Ascending aorta (tissue), 2 donors: ENCODE measurements at regions of chr2 and their contacts with region 1.

Region 1: GRCh38 chr2:127387655-127388422 is at the start of gene MAP3K2:
- DNase-seq: peak; percentile 77 to 96
- H3K4me3 ChIP-seq: peak within 1 kb of the TSS; percentile 90 to 99
- H3K27ac ChIP-seq: peak within 1 kb of the TSS; percentile 98 to 100
- H3K4me1 ChIP-seq: peaks cover 8 to 15% of the 10 kb centered on the region in 2 donors
- H3K27me3 ChIP-seq: no peaks in the 10 kb centered on the region
- CTCF ChIP-seq: no peak
- total RNA-seq, gene MAP3K2: 47.7 TPM

Region 2: DNA sequence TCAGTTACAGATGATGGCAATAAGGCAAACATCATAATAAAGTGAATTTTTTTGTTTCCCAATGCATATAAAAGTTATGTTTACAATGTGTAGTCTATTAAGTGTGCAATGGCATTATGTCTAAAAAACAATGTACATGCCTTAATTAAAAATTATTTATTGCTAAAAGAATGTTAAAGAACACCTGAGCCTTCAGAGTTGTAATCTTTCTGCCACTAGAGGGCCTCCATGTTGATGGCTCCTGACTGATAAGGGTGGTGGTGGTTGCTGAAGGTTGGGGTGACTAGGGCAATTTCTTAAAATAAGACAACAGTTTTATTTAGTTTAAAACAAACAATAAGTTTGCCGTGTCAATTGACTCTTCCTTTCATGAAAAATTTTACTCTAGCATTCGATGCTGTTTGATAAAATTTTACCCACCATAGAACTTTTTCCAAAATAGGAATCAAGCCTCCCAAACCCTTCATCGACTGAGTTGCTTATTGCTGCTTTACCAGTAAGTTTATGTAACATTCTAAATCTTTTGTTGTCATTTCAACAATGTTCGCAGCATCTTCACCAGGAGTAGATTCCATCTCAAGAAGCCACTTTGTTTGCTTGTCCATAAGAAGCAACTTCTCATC is 32.3 kb before region 1 on chr2:
- intact Hi-C with region 1: no loop called
- DNase-seq: no peak
- H3K4me3 ChIP-seq: no peak overlapping the region
- H3K27ac ChIP-seq: no peak overlapping the region
- H3K4me1 ChIP-seq: peaks cover 0 to 11% of the 10 kb centered on the region in 2 donors
- H3K27me3 ChIP-seq: no peaks in the 10 kb centered on the region
- CTCF ChIP-seq: peak; percentile 9 to 41 (median 19)

Region 3: GRCh38 chr2:127407661-127408003 is 19.8 kb after region 1 on chr2:
- intact Hi-C with region 1: loop called (anchors 1 kb)
- DNase-seq: no peak
- H3K4me3 ChIP-seq: peak overlapping the region; percentile 23 to 42
- H3K27ac ChIP-seq: peak overlapping the region; percentile 79 to 81
- H3K4me1 ChIP-seq: peaks cover 14 to 60% of the 10 kb centered on the region in 2 donors
- H3K27me3 ChIP-seq: no peaks in the 10 kb centered on the region
- CTCF ChIP-seq: no peak

Region 4: DNA sequence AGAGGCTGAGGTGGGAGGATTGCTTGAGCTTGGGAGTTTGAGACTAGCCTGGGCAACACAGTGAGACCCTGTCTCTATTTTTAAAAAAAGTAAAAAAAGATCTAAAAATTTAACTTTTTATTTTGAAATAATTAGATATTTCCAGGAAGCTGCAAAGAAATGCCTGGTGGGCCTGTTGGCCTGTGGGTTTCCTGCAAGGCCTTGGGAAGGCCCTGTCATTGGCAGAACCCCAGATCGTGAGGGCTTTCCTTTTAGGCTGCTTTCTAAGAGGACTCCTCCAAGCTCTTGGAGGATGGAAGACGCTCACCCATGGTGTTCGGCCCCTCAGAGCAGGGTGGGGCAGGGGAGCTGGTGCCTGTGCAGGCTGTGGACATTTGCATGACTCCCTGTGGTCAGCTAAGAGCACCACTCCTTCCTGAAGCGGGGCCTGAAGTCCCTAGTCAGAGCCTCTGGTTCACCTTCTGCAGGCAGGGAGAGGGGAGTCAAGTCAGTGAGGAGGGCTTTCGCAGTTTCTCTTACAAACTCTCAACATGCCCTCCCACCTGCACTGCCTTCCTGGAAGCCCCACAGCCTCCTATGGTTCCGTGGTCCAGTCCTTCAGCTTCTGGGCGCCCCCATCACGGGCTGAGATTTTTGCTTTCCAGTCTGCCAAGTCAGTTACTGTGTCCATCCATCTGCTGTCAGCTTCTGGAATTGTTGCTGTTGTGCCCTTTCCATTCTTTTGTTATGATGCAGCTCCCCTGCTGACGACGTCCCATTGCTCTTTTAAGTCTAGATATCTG is 37.0 kb after region 1 on chr2:
- intact Hi-C with region 1: no loop called
- DNase-seq: no peak
- H3K4me3 ChIP-seq: no peak overlapping the region
- H3K27ac ChIP-seq: no peak overlapping the region
- H3K4me1 ChIP-seq: peaks cover 5 to 8% of the 10 kb centered on the region in 2 donors
- H3K27me3 ChIP-seq: peaks cover 11% of the 10 kb centered on the region
- CTCF ChIP-seq: no peak

Region 5: DNA sequence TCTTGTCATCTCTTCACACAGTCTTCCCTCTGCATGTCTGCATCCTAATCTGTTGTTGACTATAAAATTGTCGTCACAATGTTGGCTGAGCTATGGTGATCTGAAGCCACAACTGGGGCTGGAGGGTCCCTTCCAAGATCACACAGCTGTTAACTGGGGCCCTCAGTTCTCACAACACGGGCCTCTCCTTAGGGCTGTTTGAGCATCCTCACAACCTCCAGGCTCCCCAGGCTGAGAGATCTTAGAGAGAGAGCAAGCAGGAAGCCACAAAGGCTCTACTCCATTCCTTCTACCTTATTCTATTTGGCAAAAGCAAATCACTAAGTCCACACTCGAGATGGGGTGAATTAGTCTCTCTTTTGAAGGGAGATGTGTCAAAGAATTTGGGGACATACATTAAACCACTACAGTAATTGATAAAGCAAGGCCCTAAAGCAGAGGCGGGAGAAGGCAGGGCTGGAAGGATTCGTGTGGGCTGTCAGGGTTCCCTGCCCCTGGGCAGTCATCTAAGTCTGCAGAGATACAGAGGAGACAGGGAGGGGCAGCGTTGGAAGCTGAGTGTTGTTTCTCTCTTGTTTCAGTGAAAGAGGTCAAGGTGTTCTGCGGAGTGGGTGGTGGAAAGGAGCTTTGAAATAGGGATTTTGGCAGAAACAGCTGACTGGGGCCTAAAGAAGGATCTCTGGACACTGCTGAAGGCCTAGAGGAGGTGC is 163.5 kb after region 1 on chr2:
- intact Hi-C with region 1: no loop called
- DNase-seq: no peak
- H3K4me3 ChIP-seq: no peak overlapping the region
- H3K27ac ChIP-seq: no peak overlapping the region
- H3K4me1 ChIP-seq: no peaks in the 10 kb centered on the region
- H3K27me3 ChIP-seq: no peaks in the 10 kb centered on the region
- CTCF ChIP-seq: no peak

Region 6: DNA sequence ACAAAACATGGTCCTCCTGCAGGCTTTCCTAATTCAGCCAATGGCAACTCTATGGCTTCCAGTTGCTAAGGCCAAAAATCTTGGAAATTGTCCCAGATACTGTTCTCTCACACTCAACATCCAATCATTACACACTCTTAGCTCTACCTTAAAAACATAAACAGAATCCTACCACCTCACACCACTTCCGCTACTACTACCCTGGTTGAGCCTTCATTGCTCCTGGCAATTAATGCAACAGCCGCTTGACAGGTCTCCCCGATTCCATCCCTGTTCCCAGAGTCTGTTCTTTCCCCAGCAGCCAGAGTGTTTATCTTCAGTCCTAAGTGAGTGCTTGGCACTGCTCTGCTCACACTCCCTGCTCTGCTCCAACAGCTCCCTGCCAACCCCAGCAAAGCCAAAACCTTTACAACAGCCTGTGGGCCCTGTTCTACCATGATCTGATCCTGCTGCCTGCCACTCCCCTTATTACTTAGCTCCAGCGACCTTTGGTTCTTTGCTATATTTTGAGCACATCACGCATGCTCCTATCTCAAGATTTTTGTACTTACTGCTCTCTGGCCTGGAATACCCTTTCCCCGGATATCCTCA is 565.4 kb after region 1 on chr2:
- intact Hi-C with region 1: no loop called
- DNase-seq: peak in 1 of 2 donors; percentile 67
- H3K4me3 ChIP-seq: peak overlapping the region in 1 of 2 donors; percentile 29
- H3K27ac ChIP-seq: peak overlapping the region; percentile 66 to 71
- H3K4me1 ChIP-seq: peaks cover 0 to 18% of the 10 kb centered on the region in 2 donors
- H3K27me3 ChIP-seq: no peaks in the 10 kb centered on the region
- CTCF ChIP-seq: no peak